ENCODE measurements at regions of chr2 and their contacts with region 1.

Region 1: GRCh38 chr2:19362755-19363473 is 4.5 kb upstream of the OSR1 start:
- DNase-seq: peak; percentile 83
- H3K4me3 ChIP-seq: peak overlapping the region; percentile 53 to 67 (median 65)
- H3K27ac ChIP-seq: peak overlapping the region; percentile 45
- H3K4me1 ChIP-seq: peaks cover 24% of the 10 kb centered on the region
- H3K27me3 ChIP-seq: no peaks in the 10 kb centered on the region
- CTCF ChIP-seq: peak; percentile 67 to 79

Region 2: DNA sequence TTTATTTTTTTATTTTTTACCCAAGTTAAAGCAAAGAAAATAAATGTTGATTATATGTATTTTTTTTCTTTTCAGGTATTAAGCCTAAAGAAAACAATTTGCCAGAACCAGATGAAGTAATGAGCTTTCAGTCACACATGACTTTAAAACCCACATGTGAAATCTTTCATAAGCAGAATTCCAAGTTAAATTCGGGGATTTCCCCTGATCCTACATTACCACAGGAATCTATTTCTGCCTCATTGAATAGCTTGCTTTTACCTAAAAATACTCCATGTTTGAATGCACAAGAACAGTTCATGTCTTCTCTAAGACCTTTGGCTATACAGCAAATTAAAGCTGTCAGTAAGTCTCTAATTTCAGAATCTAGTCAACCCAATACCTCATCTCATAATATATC is 1582.4 kb before region 1 on chr2:
- CTCF ChIA-PET with region 1: no interaction called
- dilution Hi-C with region 1: no loop called
- in situ Hi-C with region 1: no loop called
- intact Hi-C with region 1: no loop called
- DNase-seq: no peak
- H3K4me3 ChIP-seq: no peak overlapping the region
- H3K27ac ChIP-seq: no peak overlapping the region
- H3K4me1 ChIP-seq: no peaks in the 10 kb centered on the region
- H3K27me3 ChIP-seq: no peaks in the 10 kb centered on the region
- CTCF ChIP-seq: no peak

Region 3: DNA sequence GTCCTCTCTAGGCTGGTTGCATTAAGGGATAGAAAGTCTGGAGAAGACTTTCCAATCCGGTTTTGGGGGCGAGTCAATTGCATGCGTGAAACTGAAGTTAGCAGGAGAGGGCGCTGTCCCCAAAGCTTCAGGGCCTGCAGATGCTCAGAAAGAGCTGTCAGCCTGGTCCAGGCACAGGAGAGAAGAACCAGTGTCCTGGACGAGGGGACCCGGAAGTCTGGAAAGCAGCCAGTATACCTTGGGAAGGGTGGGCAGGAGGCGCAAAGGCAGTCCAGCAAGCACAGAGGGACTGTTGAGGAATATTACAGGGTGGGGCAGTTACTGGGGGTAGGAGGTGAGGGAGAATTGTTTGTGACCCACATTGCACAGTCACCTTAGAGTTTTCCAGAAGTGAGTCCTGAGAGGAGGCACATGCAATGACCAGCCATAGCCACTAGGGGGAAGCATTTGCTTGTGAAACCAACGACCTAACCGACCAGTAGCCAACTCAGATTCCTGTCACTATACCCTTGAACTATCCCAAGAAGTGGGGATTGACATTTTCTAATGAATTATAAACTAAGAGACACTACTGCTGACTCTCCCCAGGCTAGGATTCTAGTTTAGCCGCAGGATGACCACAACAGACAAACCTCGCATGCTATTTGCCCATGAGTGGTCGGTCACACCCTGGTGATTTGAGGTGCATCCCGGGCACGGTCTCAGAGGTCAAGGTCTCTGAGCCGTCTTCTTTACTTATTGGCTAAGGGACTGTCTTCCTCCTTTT is 975.3 kb before region 1 on chr2:
- CTCF ChIA-PET with region 1: no interaction called
- dilution Hi-C with region 1: no loop called
- in situ Hi-C with region 1: no loop called
- intact Hi-C with region 1: loop called (anchors 1 kb)
- DNase-seq: peak; percentile 51
- H3K4me3 ChIP-seq: no peak overlapping the region
- H3K27ac ChIP-seq: no peak overlapping the region
- H3K4me1 ChIP-seq: no peaks in the 10 kb centered on the region
- H3K27me3 ChIP-seq: no peaks in the 10 kb centered on the region
- CTCF ChIP-seq: peak; percentile 93 to 95

Region 4: DNA sequence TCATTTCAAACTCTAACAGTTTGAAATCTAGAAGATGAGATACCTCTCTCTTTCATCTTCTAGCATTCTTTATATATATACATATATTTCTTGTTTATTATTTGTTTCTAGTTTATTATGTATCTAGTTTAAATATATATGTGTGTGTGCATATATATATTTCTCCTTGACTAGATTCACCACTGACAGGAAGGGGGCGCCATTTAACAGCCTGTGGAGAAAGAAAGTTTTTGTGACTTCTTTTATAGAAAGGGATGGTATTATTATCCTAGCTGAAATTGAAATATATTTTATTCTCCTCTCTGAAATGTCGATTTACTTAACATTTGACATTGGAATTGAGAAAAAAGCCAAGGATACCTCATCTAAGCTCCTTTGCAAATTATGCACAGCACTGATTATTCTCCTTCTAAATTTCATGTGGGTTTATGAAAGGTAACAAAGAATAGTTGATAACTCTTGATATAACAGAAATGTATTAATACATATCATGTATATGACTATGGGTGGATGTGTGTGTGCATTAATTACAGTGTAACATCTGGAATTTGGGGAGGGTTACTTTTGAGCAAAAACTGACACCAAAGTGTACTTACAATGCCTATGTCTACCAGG is 612.9 kb before region 1 on chr2:
- CTCF ChIA-PET with region 1: no interaction called
- dilution Hi-C with region 1: no loop called
- in situ Hi-C with region 1: loop called (anchors 10 kb)
- intact Hi-C with region 1: loop called (anchors 1 kb)
- DNase-seq: peak; percentile 35
- H3K4me3 ChIP-seq: no peak overlapping the region
- H3K27ac ChIP-seq: no peak overlapping the region
- H3K4me1 ChIP-seq: peaks cover 9% of the 10 kb centered on the region
- H3K27me3 ChIP-seq: no peaks in the 10 kb centered on the region
- CTCF ChIP-seq: peak; percentile 73 to 81

Region 5: GRCh38 chr2:18987592-18988073 is 375.3 kb before region 1 on chr2:
- CTCF ChIA-PET with region 1: no interaction called
- dilution Hi-C with region 1: no loop called
- in situ Hi-C with region 1: no loop called
- intact Hi-C with region 1: loop called (anchors 2 kb)
- DNase-seq: peak; percentile 86
- H3K4me3 ChIP-seq: no peak overlapping the region
- H3K27ac ChIP-seq: no peak overlapping the region
- H3K4me1 ChIP-seq: peaks cover 28% of the 10 kb centered on the region
- H3K27me3 ChIP-seq: no peaks in the 10 kb centered on the region
- CTCF ChIP-seq: peak; percentile 24 to 32

Region 6: GRCh38 chr2:19059064-19059463 is 303.9 kb before region 1 on chr2:
- CTCF ChIA-PET with region 1: no interaction called
- dilution Hi-C with region 1: no loop called
- in situ Hi-C with region 1: no loop called
- intact Hi-C with region 1: no loop called
- DNase-seq: peak; percentile 80
- H3K4me3 ChIP-seq: no peak overlapping the region
- H3K27ac ChIP-seq: peak overlapping the region; percentile 63
- H3K4me1 ChIP-seq: peaks cover 17% of the 10 kb centered on the region
- H3K27me3 ChIP-seq: no peaks in the 10 kb centered on the region
- CTCF ChIP-seq: no peak

Region 7: DNA sequence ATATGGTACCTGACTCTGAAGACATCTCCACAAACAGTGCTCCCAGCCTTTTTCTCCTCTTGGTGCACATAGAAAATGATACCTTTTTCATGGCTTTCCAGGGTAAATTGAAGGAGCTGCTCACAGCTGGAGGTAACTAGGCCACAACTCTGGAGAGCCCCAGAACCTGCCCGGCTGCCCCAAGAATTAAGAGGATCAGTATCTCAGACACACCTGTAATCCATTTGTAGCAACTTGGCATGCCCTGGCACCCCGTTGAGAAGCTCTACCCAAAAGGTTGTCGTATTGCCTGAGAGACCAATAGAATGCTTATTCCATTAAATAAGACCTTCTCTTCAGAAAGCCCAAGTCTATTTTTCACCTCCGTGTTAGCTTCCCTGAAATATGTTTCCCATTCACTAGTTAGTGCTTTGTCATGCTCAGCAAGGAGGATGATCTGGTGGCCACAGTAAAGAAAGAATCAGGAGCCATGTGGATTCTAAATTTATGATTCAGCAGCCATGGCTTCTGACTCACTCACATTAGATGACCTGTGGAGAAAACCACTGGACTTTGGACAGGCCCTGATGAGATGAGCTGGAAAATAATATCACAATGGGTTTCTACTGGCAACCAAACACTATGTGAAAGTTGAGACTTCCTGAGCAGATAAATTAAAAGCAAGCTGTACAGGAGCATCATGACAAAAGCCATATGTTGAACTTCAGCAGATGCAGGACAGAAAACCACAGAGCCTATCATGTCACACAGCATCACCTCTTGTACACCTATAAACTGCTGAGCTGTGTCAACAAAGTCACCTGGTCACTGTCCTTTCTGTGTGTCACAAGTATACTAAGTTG is 248.8 kb after region 1 on chr2:
- CTCF ChIA-PET with region 1: no interaction called
- dilution Hi-C with region 1: no loop called
- in situ Hi-C with region 1: no loop called
- intact Hi-C with region 1: no loop called
- DNase-seq: peak; percentile 97
- H3K4me3 ChIP-seq: no peak overlapping the region
- H3K27ac ChIP-seq: peak overlapping the region; percentile 91
- H3K4me1 ChIP-seq: peaks cover 30% of the 10 kb centered on the region
- H3K27me3 ChIP-seq: no peaks in the 10 kb centered on the region
- CTCF ChIP-seq: no peak